MCF 10A (cell line): ENCODE measurements at regions of chr11 and their contacts with region 1.

Region 1: DNA sequence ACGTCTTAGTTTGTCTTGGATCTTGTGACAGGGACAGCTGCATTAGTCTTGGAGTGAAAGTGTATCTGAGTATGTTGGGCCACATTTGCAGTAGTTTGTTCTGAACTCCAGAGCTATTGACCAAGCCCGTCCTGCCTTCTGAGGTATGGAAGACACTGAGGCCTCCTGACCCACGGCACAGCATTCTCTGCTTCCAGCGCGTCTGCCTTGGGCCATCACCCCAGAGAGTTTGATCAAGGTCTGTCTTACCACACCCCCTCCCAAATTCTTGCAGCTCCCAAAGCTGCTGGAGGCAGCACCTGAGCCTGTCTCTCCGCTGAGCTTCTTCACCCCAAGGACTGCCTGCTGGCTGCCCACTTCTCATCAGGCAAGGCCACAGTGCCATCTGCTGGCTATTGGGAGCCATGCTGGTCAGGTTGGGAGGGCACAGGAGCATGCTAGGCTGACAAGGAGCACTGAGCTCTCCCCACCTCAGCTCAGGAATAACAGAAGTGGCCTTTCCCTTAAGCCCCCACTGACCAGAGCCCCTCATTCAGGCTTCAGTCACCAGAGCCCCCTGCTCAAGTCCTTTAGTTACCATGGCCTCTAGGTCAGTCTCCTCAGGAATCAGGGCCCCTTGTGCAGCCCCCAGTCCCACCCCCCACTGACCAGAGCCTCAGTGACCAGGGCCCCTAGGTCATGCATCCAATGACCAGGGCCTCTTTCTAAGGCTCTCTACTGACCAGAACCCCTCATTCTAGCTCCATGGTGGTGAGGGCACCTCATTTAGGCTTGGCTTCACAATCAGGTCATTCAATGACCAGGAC is 27.2 kb upstream of the SMPD1 start:
- DNase-seq: peak; percentile 81
- H3K4me3 Mint-ChIP-seq: no peak overlapping the region
- H3K27ac Mint-ChIP-seq: no peak overlapping the region
- H3K4me1 Mint-ChIP-seq: no peaks in the 10 kb centered on the region
- H3K27me3 Mint-ChIP-seq: no peaks in the 10 kb centered on the region
- CTCF ChIP-seq: peak; percentile 82

Region 2: GRCh38 chr11:5992604-5993251 is 370.3 kb before region 1 on chr11:
- CTCF ChIA-PET with region 1: interaction called, 10 read pairs
- POLR2A ChIA-PET with region 1: no interaction called
- intact Hi-C with region 1: no loop called
- DNase-seq: peak; percentile 32
- H3K4me3 Mint-ChIP-seq: no peak overlapping the region
- H3K27ac Mint-ChIP-seq: no peak overlapping the region
- H3K4me1 Mint-ChIP-seq: no peaks in the 10 kb centered on the region
- H3K27me3 Mint-ChIP-seq: no peaks in the 10 kb centered on the region
- CTCF ChIP-seq: peak; percentile 31

Region 3: GRCh38 chr11:6079463-6079862 is 283.6 kb before region 1 on chr11:
- CTCF ChIA-PET with region 1: interaction called, 10 read pairs
- POLR2A ChIA-PET with region 1: no interaction called
- intact Hi-C with region 1: no loop called
- DNase-seq: no peak
- H3K4me3 Mint-ChIP-seq: no peak overlapping the region
- H3K27ac Mint-ChIP-seq: no peak overlapping the region
- H3K4me1 Mint-ChIP-seq: no peaks in the 10 kb centered on the region
- H3K27me3 Mint-ChIP-seq: no peaks in the 10 kb centered on the region
- CTCF ChIP-seq: no peak

Region 4: DNA sequence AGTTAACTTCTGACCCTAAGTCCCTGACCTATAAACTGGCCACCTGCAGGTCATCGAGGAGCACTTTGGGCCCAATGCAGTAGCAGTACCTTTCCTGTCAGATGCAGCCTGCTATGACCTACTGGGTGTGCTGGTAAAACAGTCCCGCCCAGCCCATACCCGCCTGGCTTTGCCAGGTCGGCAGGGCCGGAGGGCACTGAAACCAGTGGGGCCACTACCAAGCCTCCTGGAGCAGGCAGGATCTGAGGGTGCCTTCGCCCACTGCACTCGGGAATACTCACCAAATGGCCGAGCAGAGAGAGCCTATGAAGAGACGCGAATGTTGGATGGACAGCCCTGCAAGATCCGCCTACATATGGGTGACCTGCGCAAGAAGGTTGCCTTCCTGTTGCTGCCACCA is 153.3 kb before region 1 on chr11:
- CTCF ChIA-PET with region 1: no interaction called
- POLR2A ChIA-PET with region 1: no interaction called
- intact Hi-C with region 1: no loop called
- DNase-seq: no peak
- H3K4me3 Mint-ChIP-seq: no peak overlapping the region
- H3K27ac Mint-ChIP-seq: no peak overlapping the region
- H3K4me1 Mint-ChIP-seq: peaks cover 4% of the 10 kb centered on the region
- H3K27me3 Mint-ChIP-seq: no peaks in the 10 kb centered on the region
- CTCF ChIP-seq: no peak

Region 5: DNA sequence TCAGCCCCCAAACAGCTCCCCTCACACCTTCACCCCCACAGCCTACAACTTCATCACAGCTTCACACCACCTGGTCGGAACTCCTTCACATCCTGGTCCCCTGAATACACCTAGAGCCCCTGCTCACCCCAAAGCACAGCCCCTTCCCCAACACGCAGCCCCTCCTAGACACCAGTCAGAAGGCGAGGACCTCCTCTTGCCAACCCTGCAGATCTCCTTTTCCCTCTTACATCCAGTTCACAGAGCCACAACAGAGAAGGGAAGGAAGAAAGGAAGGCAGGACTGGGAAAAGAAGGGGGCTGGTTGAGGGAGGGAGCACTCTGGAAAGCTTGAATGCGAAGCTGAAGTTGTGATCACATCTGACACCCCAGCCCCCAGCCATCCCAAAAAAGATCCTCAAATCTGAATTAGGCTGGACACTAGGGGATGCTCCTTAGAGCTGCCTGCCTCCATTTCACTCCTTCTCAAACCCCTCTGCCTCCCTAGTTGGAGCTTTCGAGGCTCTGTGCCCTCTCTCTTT is 102.8 kb before region 1 on chr11:
- CTCF ChIA-PET with region 1: interaction called, 72 read pairs
- POLR2A ChIA-PET with region 1: no interaction called
- intact Hi-C with region 1: no loop called
- DNase-seq: no peak
- H3K4me3 Mint-ChIP-seq: no peak overlapping the region
- H3K27ac Mint-ChIP-seq: no peak overlapping the region
- H3K4me1 Mint-ChIP-seq: no peaks in the 10 kb centered on the region
- H3K27me3 Mint-ChIP-seq: peaks cover 1% of the 10 kb centered on the region
- CTCF ChIP-seq: no peak

Region 6: DNA sequence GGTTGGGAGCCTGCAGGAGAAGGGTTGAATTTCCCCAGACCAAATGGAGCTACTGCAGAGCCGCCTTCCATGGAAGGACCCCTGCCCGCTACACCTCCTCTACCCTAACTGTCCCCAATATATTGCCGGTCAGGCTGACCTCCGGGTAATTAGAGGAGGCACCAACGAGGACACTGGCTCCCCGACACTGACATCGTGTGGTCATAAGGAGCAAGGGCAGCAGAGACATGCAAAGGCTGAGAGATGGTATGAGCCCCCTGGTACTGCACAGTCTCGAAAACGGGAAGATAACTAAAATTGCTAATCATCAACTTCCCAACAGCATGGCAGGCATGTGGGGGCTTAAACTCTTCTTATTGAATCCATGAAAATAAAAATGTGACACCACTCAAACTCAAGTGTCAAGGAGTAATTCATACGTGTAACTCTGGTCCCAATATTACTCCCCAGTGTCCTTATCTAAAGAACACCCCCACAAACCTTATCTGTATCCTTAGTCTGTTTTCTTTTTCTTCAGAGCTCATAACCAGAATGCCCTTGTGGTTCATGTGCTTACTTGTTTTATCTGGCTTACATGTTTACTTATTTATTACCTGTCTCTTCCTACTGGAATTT is 47.2 kb before region 1 on chr11:
- CTCF ChIA-PET with region 1: interaction called, 176 read pairs
- POLR2A ChIA-PET with region 1: interaction called, 4 read pairs
- intact Hi-C with region 1: no loop called
- DNase-seq: peak; percentile 73
- H3K4me3 Mint-ChIP-seq: no peak overlapping the region
- H3K27ac Mint-ChIP-seq: no peak overlapping the region
- H3K4me1 Mint-ChIP-seq: peaks cover 18% of the 10 kb centered on the region
- H3K27me3 Mint-ChIP-seq: no peaks in the 10 kb centered on the region
- CTCF ChIP-seq: peak; percentile 80

Region 7: GRCh38 chr11:6389921-6390724 is 27.0 kb after region 1 on chr11 and contains the start of gene SMPD1:
- CTCF ChIA-PET with region 1: interaction called, 16 read pairs
- POLR2A ChIA-PET with region 1: interaction called, 3 read pairs
- intact Hi-C with region 1: no loop called
- DNase-seq: peak; percentile 91
- H3K4me3 Mint-ChIP-seq: peak within 1 kb of the TSS; percentile 94
- H3K27ac Mint-ChIP-seq: peak within 1 kb of the TSS; percentile 96
- H3K4me1 Mint-ChIP-seq: peaks cover 29% of the 10 kb centered on the region
- H3K27me3 Mint-ChIP-seq: no peaks in the 10 kb centered on the region
- CTCF ChIP-seq: no peak
- total RNA-seq, gene SMPD1: 15.0 and 32.2 TPM in 2 replicates

Region 8: DNA sequence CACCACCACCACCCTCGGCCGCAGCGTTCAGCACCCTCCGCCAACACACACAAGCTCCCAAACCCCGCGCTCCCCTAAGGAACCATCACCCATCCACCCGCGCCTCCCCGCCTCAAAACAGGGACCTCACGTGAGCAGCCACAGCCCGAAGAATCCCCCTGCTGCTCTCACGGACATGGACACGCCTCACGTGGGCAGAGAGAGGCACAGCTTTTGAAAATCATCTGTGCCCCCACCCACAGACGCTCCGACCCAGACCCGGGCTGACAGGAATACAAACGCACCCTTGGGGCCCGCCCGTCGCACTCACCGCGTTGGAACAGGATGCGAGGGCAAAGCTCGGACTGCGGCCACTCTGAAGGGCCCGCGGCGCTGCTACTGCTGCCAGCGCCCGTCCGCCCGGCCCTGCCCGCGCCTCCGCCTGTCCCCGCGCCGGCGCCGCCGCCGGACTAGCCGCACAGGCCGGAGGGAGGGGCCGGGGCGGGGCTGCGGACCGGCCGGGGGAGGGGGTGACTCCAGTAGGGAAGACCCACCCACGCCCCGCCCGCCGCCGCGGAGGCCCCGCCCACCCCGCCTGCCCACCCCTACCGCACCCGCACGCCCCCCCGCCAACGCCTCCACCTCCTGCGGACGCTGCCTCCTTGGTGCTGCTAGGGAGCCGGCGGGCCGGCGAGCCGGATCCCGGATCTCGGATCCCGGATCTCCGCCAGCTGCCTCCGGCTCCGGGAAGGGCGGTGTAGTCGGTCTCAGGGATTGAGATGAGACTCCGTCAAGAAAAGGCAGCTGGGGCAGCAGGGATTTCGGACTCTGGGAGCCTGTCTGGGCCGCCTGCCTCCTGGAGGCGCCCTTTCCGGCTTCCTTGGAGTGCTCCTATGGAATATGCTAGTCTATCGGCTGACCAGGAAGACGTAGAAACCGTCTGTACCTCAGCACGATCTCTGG is 110.7 kb after region 1 on chr11 and contains the start of gene TRIM3:
- CTCF ChIA-PET with region 1: no interaction called
- POLR2A ChIA-PET with region 1: no interaction called
- intact Hi-C with region 1: no loop called
- DNase-seq: peak; percentile 83
- H3K4me3 Mint-ChIP-seq: peak within 1 kb of the TSS; percentile 83
- H3K27ac Mint-ChIP-seq: peak within 1 kb of the TSS; percentile 87
- H3K4me1 Mint-ChIP-seq: peaks cover 11% of the 10 kb centered on the region
- H3K27me3 Mint-ChIP-seq: no peaks in the 10 kb centered on the region
- CTCF ChIP-seq: no peak
- total RNA-seq, gene TRIM3: 7.3 and 7.4 TPM in 2 replicates